Left cardiac atrium (tissue), 4 donors: ENCODE measurements at regions of chr1 and their contacts with region 1.

Region 1: GRCh38 chr1:1779706-1780597 is 1.7 kb upstream of the NADK start:
- DNase-seq: peak; percentile 57
- ATAC-seq: peak in 1 of 2 donors; percentile 15

Region 2: GRCh38 chr1:1906185-1907097 is 126.5 kb after region 1 on chr1:
- intact Hi-C with region 1: loop called (anchors 10 kb)
- DNase-seq: peak; percentile 90
- ATAC-seq: peak; percentile 61 to 67